PC-9 (cell line): ENCODE measurements at regions of chr17 and their contacts with region 1.

Region 1: GRCh38 chr17:63751806-63752205 is 10.2 kb upstream of the STRADA start:
- DNase-seq: no peak
- H3K4me3 ChIP-seq: no peak overlapping the region
- H3K27ac ChIP-seq: no peak overlapping the region
- H3K4me1 ChIP-seq: no peaks in the 10 kb centered on the region
- H3K27me3 ChIP-seq: no peaks in the 10 kb centered on the region
- CTCF ChIP-seq: no peak

Region 2: GRCh38 chr17:63798572-63799106 is 46.8 kb after region 1 on chr17:
- CTCF ChIA-PET with region 1: no interaction called
- POLR2A ChIA-PET with region 1: no interaction called
- intact Hi-C with region 1: loop called (anchors 5 kb)
- DNase-seq: no peak
- H3K4me3 ChIP-seq: no peak overlapping the region
- H3K27ac ChIP-seq: no peak overlapping the region
- H3K4me1 ChIP-seq: no peaks in the 10 kb centered on the region
- H3K27me3 ChIP-seq: no peaks in the 10 kb centered on the region
- CTCF ChIP-seq: no peak